ENCODE measurements at regions of chr7 and their contacts with region 1.

Region 1: DNA sequence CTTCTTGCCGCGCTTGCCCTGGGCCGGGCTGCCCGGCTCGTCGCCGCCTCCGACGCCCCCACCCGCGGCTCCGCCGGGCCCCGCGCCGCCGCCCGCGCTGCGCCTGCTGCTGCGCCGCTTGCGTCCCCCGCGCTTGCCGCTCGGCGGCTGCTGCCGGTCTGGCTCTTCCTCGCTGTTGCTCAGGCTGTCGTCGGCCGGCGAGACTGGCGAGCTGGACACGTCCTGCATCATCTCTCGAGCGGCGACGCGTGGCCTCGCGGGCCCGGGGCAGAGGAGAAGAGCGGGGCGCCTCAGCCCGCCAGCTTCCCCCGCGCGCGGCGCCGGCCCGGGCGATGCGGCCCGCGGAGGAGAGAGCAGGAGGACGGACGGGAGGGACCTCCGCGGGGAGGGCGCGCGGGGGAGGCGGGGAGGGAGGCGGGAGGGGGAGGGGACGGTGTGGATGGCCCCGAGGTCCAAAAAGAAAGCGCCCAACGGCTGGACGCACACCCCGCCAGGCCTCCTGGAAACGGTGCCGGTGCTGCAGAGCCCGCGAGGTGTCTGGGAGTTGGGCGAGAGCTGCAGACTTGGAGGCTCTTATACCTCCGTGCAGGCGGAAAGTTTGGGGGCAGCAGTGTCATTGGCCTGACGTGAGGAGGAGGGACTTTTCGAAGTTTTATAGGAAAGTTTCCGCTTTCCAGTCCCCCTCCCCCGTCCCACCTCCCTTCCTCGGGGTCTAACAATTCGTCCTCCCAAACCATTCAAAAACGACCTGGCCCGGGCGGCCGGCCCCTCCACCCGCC is at the start of gene TWIST1:
- DNase-seq: peak; percentile 68
- H3K4me3 Mint-ChIP-seq: peak within 1 kb of the TSS; percentile 97
- H3K27ac Mint-ChIP-seq: peak within 1 kb of the TSS; percentile 91
- H3K4me1 Mint-ChIP-seq: peaks cover 12% of the 10 kb centered on the region
- H3K27me3 Mint-ChIP-seq: no peaks in the 10 kb centered on the region
- CTCF ChIP-seq: no peak
- total RNA-seq, gene TWIST1: 16.1 and 18.9 TPM in 2 replicates

Region 2: DNA sequence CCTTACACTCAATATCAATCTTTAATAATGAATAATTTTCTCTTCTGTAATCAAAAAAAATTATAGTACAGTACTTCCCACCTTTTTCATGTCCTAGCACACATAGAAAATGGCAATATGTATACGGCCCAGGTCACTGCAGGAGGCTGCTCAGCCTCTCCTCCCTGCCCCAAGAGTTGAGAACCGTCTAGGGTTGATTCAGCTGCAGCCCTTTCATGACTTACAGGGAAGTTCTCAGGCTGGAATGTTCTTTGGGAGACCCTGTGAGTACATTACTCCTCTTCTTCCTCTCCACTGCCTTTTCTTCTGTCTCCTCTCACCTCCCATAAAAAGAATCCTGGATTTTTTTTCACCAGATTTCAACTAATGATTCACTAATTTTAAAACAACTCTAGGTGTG is 441.7 kb before region 1 on chr7:
- CTCF ChIA-PET with region 1: no interaction called
- POLR2A ChIA-PET with region 1: no interaction called
- intact Hi-C with region 1: no loop called
- DNase-seq: no peak
- H3K4me3 Mint-ChIP-seq: no peak overlapping the region
- H3K27ac Mint-ChIP-seq: no peak overlapping the region
- H3K4me1 Mint-ChIP-seq: peaks cover 7% of the 10 kb centered on the region
- H3K27me3 Mint-ChIP-seq: no peaks in the 10 kb centered on the region
- CTCF ChIP-seq: no peak

Region 3: GRCh38 chr7:18693406-18693805 is 423.9 kb before region 1 on chr7:
- CTCF ChIA-PET with region 1: interaction called, 9 read pairs
- POLR2A ChIA-PET with region 1: interaction called, 12 read pairs
- intact Hi-C with region 1: loop called (anchors 1 kb)
- DNase-seq: peak; percentile 80
- H3K4me3 Mint-ChIP-seq: no peak overlapping the region
- H3K27ac Mint-ChIP-seq: no peak overlapping the region
- H3K4me1 Mint-ChIP-seq: peaks cover 8% of the 10 kb centered on the region
- H3K27me3 Mint-ChIP-seq: no peaks in the 10 kb centered on the region
- CTCF ChIP-seq: peak; percentile 69

Region 4: GRCh38 chr7:18978108-18978495 is 139.2 kb before region 1 on chr7:
- CTCF ChIA-PET with region 1: interaction called, 5 read pairs
- POLR2A ChIA-PET with region 1: interaction called, 49 read pairs
- intact Hi-C with region 1: loop called (anchors 1 kb)
- DNase-seq: peak; percentile 92
- H3K4me3 Mint-ChIP-seq: peak overlapping the region; percentile 39
- H3K27ac Mint-ChIP-seq: peak overlapping the region; percentile 73
- H3K4me1 Mint-ChIP-seq: peaks cover 58% of the 10 kb centered on the region
- H3K27me3 Mint-ChIP-seq: no peaks in the 10 kb centered on the region
- CTCF ChIP-seq: no peak

Region 5: DNA sequence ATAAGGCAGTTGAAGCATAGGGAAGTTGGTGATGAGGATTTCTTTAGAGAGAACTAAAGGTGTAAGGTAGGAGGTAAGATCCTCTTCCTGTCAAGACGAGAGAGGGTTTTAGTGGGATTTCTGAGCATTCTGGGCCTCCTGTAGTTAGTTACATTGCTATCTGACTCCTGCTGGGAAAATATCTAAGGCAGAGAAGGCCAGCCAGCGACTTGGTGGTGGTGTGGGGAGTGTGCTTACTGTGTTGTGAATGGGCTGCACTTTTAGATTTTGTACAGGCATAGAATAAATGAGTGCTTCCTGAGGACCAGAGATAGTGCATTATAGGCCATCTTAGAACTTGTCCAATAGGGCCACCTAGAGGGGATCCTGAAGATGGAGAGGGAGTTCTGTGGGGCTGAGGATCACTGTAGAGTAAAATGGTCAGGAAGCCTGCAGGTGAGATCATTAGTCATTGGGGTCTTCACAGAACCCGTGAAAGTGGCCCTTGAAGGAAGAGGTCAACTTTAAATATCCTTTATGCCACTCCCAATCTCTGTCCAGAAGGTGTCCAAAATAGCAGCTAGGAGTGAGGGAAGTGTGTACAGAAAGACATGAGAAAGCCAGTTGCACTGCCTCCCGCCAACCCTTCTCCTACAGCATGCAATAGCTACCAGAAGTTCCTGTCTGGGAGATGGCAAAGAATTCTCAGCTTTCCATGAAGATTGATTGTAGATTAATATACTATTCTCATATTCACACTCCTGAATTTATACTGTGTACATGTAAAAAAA is 324.9 kb after region 1 on chr7:
- CTCF ChIA-PET with region 1: interaction called, 4 read pairs
- POLR2A ChIA-PET with region 1: no interaction called
- intact Hi-C with region 1: loop called (anchors 1 kb)
- DNase-seq: peak; percentile 67
- H3K4me3 Mint-ChIP-seq: no peak overlapping the region
- H3K27ac Mint-ChIP-seq: no peak overlapping the region
- H3K4me1 Mint-ChIP-seq: peaks cover 6% of the 10 kb centered on the region
- H3K27me3 Mint-ChIP-seq: no peaks in the 10 kb centered on the region
- CTCF ChIP-seq: peak; percentile 46

Region 6: GRCh38 chr7:19560111-19560883 is 443.0 kb after region 1 on chr7:
- CTCF ChIA-PET with region 1: interaction called, 6 read pairs
- POLR2A ChIA-PET with region 1: interaction called, 10 read pairs
- intact Hi-C with region 1: loop called (anchors 1 kb)
- DNase-seq: peak; percentile 91
- H3K4me3 Mint-ChIP-seq: peak overlapping the region; percentile 70
- H3K27ac Mint-ChIP-seq: peak overlapping the region; percentile 98
- H3K4me1 Mint-ChIP-seq: peaks cover 44% of the 10 kb centered on the region
- H3K27me3 Mint-ChIP-seq: no peaks in the 10 kb centered on the region
- CTCF ChIP-seq: no peak